ENCODE measurements at regions of chr11 and their contacts with region 1.

Region 1: DNA sequence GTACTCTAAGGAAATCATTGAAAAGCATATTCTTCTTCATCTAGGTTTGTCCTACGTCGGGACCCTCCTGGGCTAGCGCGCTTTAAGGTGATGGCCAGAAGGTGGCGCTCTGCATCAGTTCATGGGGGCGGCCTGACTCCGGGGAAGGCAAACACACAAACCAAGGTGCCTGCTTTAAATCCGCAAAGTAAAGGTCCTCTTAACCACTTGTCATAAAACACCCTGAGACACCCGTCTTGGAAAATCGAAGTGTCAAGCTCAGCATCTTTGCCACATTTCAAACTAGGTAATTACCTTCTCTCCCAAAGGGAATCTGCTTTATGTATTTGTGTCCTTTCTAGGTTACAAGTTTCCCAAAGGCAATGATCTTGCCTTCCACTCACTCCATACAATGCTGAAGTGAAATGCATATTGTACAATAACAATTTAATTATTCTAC is 33.9 kb downstream of the LMO2 start:
- DNase-seq: no peak
- H3K4me3 ChIP-seq: no peak overlapping the region
- H3K27ac ChIP-seq: no peak overlapping the region
- H3K4me1 ChIP-seq: peaks cover 0 to 33% (median 13%) of the 10 kb centered on the region in 3 donors
- H3K27me3 ChIP-seq: peaks cover 0 to 26% (median 0%) of the 10 kb centered on the region in 4 donors
- CTCF ChIP-seq: peak; percentile 82 to 92 (median 90)
- POLR2A ChIP-seq: no peak

Region 2: DNA sequence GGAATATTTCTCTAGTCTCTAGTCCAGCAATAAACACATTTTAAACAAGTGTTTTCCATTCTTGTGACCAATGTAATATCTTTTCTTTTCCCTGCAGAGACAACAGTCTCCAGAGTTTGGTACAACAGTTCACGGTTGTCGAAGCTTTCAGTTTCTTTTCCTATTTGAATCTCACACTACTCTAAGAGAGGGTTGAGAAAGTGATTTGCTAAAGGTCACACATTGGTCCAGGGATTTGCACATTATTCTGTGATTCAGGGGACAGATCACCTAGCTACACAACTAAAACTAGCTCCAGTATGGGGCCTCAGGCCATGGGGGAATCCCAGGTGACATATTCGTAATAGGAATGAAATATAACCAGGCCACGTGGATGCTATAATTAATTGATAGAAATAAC is 468.3 kb before region 1 on chr11:
- intact Hi-C with region 1: no loop called
- DNase-seq: no peak
- H3K4me3 ChIP-seq: no peak overlapping the region
- H3K27ac ChIP-seq: no peak overlapping the region
- H3K4me1 ChIP-seq: no peaks in the 10 kb centered on the region
- H3K27me3 ChIP-seq: peaks cover 0 to 2% (median 0%) of the 10 kb centered on the region in 4 donors
- CTCF ChIP-seq: no peak
- POLR2A ChIP-seq: no peak

Region 3: DNA sequence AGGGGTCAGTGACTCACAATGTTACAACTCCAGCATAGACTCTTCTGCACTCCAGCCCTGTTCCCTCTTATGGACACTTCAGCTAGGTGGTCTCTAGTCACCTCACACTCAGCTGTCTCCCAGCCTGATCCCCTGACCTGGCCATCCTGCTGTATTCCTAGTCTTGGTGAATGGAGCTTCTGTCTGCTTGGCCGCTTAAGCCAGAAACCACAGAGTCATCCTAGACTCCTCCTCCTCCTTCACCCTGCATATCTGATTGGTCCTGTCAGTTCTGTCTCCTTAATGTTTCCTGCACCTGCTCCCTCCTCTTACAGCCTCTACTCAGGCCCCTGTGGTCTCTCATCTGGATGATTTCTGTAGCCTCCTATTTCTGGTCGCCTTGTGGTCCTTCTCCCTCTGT is 455.9 kb before region 1 on chr11:
- intact Hi-C with region 1: no loop called
- DNase-seq: no peak
- H3K4me3 ChIP-seq: no peak overlapping the region
- H3K27ac ChIP-seq: no peak overlapping the region
- H3K4me1 ChIP-seq: no peaks in the 10 kb centered on the region
- H3K27me3 ChIP-seq: no peaks in the 10 kb centered on the region
- CTCF ChIP-seq: no peak
- POLR2A ChIP-seq: no peak

Region 4: GRCh38 chr11:33970984-33971466 is 113.1 kb after region 1 on chr11:
- intact Hi-C with region 1: loop called (anchors 2 kb)
- DNase-seq: no peak
- H3K4me3 ChIP-seq: no peak overlapping the region
- H3K27ac ChIP-seq: no peak overlapping the region
- H3K4me1 ChIP-seq: peaks cover 0 to 4% (median 0%) of the 10 kb centered on the region in 3 donors
- H3K27me3 ChIP-seq: peaks cover 0 to 6% (median 0%) of the 10 kb centered on the region in 4 donors
- CTCF ChIP-seq: peak in 5 of 6 experiments; percentile 63 to 76 (median 74)
- POLR2A ChIP-seq: no peak

Region 5: GRCh38 chr11:34051349-34052035 is 193.5 kb after region 1 on chr11 and contains the start of gene CAPRIN1:
- intact Hi-C with region 1: no loop called
- DNase-seq: peak; percentile 44
- H3K4me3 ChIP-seq: peak within 1 kb of the TSS; percentile 91 to 97 (median 96)
- H3K27ac ChIP-seq: peak within 1 kb of the TSS; percentile 97 to 99 (median 98)
- H3K4me1 ChIP-seq: peaks cover 0 to 43% (median 31%) of the 10 kb centered on the region in 3 donors
- H3K27me3 ChIP-seq: no peaks in the 10 kb centered on the region
- CTCF ChIP-seq: peak in 1 of 6 experiments; percentile 6
- POLR2A ChIP-seq: peak in 2 of 4 donors; percentile 78 to 80
- total RNA-seq, gene CAPRIN1: 94.1 to 151 (median 132) TPM

Measured in esophagus squamous epithelium (tissue), 5 donors.